ENCODE measurements at regions of chr4 and their contacts with region 1.

Region 1: DNA sequence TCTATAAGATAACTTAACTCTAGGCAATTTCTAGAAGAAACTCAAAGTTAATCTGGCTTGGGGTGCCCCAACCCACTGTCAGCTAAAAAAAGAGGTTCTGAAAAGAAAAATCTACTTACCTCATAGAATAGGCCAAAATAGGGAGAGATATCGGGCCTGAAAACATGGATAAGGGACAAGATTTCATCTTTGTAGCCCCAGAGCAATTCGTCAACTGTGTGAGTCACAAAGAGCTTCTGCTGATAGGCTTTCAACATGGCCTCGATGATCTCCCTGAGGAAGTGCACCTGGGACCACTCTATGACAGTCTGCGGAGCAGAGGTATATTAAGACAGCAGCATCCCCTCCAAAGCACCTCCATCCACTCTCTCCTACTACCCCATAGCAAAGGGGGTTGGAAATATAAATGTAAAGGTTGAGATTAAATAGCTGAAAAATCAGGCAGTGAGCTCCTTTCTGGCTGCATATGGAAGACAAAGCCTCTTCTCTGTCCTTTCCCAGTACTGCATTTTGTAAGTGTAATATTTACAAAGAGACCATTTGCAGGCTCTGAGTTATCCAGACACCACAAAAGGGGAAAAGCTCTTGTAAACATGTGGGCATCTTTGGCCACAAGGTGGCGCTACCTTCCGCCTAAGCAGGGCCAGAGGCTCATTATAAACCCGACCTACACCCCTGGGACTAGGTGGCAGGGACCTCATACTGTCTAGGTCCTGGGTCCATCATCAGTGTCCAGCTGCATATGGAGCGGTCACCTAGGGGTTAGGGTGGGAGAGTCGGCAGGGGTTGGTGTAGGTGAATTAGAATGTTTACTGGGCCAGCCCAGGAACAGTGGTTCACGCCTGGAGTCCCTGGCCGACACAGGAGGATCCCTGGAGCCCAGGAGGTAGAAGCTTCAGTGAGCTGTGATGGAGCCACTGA is 31.5 kb upstream of the NUP54 start:
- DNase-seq: peak; percentile 78 to 84
- ATAC-seq: peak; percentile 94 to 98
- H3K4me3 ChIP-seq: no peak overlapping the region
- H3K27ac ChIP-seq: no peak overlapping the region
- H3K4me1 ChIP-seq: no peaks in the 10 kb centered on the region
- CTCF ChIP-seq: peak; percentile 76
- EP300 ChIP-seq: no peak
- POLR2A ChIP-seq: no peak
- RAD21 ChIP-seq: peak; percentile 77 to 84

Region 2: GRCh38 chr4:76168688-76169087 is 11.0 kb before region 1 on chr4:
- CTCF ChIA-PET with region 1: interaction called, 18 read pairs
- POLR2A ChIA-PET with region 1: no interaction called
- DNase-seq: no peak
- ATAC-seq: no peak
- H3K4me3 ChIP-seq: no peak overlapping the region
- H3K27ac ChIP-seq: no peak overlapping the region
- H3K4me1 ChIP-seq: no peaks in the 10 kb centered on the region
- CTCF ChIP-seq: no peak
- EP300 ChIP-seq: no peak
- POLR2A ChIP-seq: no peak
- RAD21 ChIP-seq: no peak

Region 3: DNA sequence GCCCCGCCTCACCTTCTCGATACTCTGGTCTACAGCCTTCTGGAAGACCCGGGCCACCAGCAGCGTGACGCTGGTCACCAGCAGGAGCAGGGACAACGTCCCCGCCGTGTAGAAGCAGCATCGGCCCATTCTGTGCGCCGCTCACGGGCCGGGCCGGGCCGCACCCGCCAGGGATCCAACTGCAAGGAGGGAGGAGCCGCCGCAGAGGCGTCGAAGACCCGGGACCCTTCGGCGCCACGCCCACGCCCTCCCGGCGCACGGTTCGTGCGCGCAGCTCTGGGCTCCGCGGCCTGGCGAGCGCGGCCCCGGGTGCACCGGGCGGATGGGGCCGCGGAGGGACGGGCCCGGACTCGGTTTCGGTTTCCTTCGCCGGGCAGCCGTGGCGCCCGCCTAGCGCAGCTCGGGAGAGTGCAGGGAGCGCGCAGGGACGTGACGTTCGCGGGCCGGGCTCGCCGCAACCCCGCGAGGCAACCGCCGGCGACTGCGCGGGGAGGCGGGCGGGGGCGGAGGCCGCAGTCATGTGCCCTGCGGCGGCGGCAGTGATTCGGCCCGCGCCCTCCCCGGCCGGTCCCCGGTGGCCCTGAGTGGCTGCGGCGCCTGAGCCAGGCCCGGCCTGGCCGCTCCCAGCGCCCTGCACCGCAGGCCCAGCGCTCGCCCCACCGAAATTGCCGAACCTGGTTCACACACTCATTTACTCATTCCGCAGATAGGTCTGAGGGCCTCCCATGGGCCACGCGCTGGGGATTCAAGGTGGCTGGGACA is 33.9 kb after region 1 on chr4 and contains the start of gene SCARB2:
- CTCF ChIA-PET with region 1: interaction called, 18 read pairs
- POLR2A ChIA-PET with region 1: no interaction called
- DNase-seq: peak; percentile 60 to 80
- ATAC-seq: peak; percentile 94 to 95
- H3K4me3 ChIP-seq: peak within 1 kb of the TSS; percentile 78
- H3K27ac ChIP-seq: peak within 1 kb of the TSS; percentile 98 to 99
- H3K4me1 ChIP-seq: peaks cover 35% of the 10 kb centered on the region
- CTCF ChIP-seq: no peak
- EP300 ChIP-seq: no peak
- POLR2A ChIP-seq: peak; percentile 59
- RAD21 ChIP-seq: no peak
- polyA plus RNA-seq, gene SCARB2: 65.4 and 73.4 TPM in 2 replicates

Region 4: DNA sequence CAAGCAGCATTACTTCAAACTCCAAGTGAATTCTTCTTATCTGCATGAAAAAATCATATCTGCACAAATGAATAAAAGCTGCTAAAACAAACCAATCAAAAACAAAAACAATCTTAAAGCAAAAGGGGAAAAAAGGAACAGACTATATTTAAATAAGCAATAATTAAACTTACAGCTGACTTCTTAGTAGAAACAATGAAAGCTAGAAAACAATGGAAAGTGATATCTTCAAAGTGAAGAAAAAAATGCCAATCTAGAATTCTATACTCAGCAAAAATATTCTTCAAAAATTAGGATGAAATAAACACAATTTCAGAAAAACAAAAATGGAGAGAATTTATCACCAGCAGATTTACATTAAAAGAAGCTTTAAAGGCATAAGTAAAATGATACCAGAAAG is 146.9 kb after region 1 on chr4:
- CTCF ChIA-PET with region 1: interaction called, 10 read pairs
- POLR2A ChIA-PET with region 1: no interaction called
- DNase-seq: no peak
- ATAC-seq: no peak
- H3K4me3 ChIP-seq: no peak overlapping the region
- H3K27ac ChIP-seq: no peak overlapping the region
- H3K4me1 ChIP-seq: no peaks in the 10 kb centered on the region
- CTCF ChIP-seq: no peak
- EP300 ChIP-seq: no peak
- POLR2A ChIP-seq: no peak
- RAD21 ChIP-seq: no peak

Region 5: DNA sequence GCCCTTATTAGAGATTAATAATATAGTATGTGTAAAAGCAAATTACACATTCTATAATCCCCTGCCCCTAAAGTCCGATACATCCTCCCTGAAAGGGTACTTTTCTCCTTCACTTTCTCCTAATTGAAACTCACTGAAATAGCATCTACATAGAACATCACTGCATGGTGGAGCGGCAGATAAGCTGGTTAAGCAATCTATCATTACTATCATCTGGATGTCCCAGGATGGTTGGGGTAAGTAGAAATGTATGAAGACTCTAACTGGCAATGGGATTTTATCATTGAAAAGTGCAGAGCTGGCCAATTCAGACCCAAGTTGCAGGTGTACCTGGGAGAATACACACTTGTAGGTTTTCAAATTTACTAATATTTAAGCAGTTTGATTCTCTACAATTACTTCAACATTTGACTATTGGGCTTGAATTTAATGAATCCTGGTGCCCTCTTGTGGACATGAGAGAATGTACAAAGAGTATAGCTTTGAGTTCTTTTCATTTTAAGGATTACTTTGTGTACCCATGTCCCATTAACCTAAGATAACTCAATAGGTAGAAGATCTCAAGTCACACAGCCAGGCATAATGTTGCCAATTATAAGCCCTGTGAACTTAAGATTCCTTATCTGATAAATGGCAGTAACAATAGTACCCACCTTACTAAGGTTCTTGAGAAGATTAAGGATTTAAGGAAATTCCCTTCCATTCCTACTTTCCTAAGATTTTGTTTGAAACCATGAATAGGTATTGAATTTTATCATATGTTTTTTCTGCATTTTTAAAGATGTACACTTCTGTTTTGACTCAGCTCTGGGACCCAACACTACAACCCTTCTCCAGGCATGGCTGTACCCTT is 325.2 kb after region 1 on chr4:
- CTCF ChIA-PET with region 1: interaction called, 16 read pairs
- POLR2A ChIA-PET with region 1: no interaction called
- DNase-seq: peak; percentile 33 to 39
- ATAC-seq: peak in 1 of 2 experiments; percentile 69; a peak in 3 of 6 replicates
- H3K4me3 ChIP-seq: no peak overlapping the region
- H3K27ac ChIP-seq: no peak overlapping the region
- H3K4me1 ChIP-seq: no peaks in the 10 kb centered on the region
- CTCF ChIP-seq: peak; percentile 62
- EP300 ChIP-seq: no peak
- POLR2A ChIP-seq: no peak
- RAD21 ChIP-seq: peak; percentile 61 to 66